ENCODE measurements at regions of chr17 and their contacts with region 1.

Region 1: DNA sequence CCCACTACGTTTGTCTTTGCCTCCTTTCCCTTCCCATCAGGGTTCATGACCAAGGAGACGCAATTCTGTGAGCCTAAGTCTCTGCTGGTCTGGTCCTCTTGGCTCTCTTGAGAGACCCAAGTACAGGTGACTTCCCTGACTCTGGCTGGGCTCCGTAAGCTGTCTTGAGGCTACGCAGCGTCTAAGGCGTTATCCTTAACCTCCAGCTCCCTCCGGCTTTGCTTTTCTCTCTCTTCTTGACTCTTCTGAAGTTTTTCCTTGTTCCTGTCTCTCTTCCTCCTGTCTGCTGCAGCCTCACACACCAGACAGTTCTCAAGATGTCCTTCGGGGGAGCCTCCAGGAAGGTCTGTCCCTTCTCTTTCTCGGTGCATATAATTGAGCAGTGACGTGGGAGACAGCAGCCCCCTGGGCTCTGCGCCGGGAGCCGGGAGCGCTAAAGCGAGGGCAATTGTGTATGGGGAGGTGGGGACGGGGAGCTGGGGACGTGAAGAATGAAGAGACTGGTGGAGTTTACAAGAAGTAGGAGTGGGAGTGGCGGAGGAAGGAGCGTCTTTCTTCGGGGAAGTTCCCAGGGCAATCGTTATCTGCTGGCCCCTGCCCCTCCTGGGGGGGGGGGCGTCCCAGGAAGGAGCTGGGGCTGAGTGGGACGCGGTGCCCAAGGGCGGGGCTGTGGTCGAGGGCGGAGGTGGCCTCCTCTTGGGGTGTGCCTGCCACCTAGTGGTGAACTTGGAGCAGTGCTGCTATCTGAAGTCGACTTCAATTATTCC is 6.9 kb upstream of the PIRT start:
- DNase-seq: peak; percentile 55 to 79
- H3K4me3 ChIP-seq: peak overlapping the region; percentile 39 to 55
- H3K27ac ChIP-seq: no peak overlapping the region
- H3K4me1 ChIP-seq: peaks cover 0 to 9% (median 3%) of the 10 kb centered on the region in 4 donors
- H3K27me3 ChIP-seq: no peaks in the 10 kb centered on the region
- CTCF ChIP-seq: peak; percentile 93 to 96

Region 2: DNA sequence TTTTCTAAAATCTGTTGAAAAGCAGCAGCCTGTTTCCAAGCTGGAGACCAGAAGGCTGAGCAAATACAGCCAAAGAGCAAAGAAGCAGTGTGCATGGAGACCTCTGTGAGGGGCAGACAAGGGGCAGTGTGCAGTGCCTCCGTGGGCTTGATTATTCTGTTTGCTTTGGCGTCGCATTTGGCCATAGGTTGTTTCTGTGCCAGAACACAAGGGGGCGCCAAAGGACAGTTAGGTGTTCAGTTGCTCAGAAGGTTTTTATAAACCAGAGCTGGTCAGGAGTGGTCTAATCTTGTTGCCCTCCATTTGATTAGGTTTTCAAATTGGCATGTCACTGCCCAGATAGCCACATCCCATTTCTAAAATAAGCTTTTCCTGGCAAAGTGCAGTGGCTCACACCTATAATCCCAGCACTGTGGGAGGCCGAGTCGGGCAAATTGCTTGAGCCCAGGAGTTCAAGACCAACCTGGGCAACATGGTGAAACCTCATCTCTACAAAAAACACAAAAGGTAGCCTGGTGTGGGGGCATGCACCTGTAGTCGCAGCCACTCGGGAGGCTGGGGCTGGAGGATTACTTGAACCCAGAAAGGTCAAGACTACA is 198.3 kb before region 1 on chr17:
- intact Hi-C with region 1: loop called (anchors 2 kb)
- DNase-seq: peak; percentile 69 to 79
- H3K4me3 ChIP-seq: no peak overlapping the region
- H3K27ac ChIP-seq: no peak overlapping the region
- H3K4me1 ChIP-seq: peaks cover 0 to 14% (median 1%) of the 10 kb centered on the region in 4 donors
- H3K27me3 ChIP-seq: no peaks in the 10 kb centered on the region
- CTCF ChIP-seq: peak; percentile 76 to 88

Region 3: DNA sequence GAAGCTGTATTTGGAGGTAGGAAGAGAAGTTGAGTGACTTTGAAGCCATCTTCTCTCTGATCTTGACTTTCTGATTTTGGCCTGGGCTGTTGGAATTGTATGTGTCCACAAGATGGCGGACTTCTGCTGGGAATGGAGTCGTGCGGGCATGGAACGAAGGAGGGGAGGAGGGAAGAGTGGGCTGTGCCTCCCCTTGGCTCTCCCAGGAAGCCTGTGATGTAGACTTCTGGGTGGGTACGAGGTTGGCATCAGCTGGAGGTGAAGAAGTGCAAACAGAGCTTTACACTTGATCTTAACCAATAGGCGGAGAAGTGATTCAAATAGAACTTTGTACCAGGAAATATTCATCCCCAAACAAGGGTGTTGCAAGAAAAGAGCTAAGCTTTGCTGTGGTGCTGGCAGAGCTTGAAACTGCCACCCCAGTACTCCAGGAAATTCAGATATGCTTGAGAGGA is 107.6 kb before region 1 on chr17:
- intact Hi-C with region 1: loop called (anchors 2 kb)
- DNase-seq: peak in 1 of 2 donors; percentile 61
- H3K4me3 ChIP-seq: no peak overlapping the region
- H3K27ac ChIP-seq: no peak overlapping the region
- H3K4me1 ChIP-seq: peaks cover 0 to 6% (median 0%) of the 10 kb centered on the region in 4 donors
- H3K27me3 ChIP-seq: no peaks in the 10 kb centered on the region
- CTCF ChIP-seq: peak; percentile 70 to 73

Measured in tibial artery (tissue), 4 donors.